CD4-positive, alpha-beta T cell (primary cell): ENCODE measurements at regions of chr17 and their contacts with region 1.

Region 1: GRCh38 chr17:50865984-50866774 is at the start of gene TOB1:
- DNase-seq: peak; percentile 93 to 98 (median 97)
- ATAC-seq: peak; percentile 59
- H3K4me3 ChIP-seq: peak within 1 kb of the TSS; percentile 92
- H3K4me3 Mint-ChIP-seq: peak within 1 kb of the TSS; percentile 98
- H3K27ac ChIP-seq: peak within 1 kb of the TSS; percentile 92 to 98
- H3K27ac Mint-ChIP-seq: peak within 1 kb of the TSS; percentile 98
- H3K4me1 ChIP-seq: peaks cover 38% of the 10 kb centered on the region
- H3K4me1 Mint-ChIP-seq: peaks cover 68% of the 10 kb centered on the region
- H3K27me3 ChIP-seq: no peaks in the 10 kb centered on the region
- H3K27me3 Mint-ChIP-seq: peaks cover 5% of the 10 kb centered on the region
- CTCF ChIP-seq: no peak
- total RNA-seq, gene TOB1: 419 to 449 TPM

Region 2: DNA sequence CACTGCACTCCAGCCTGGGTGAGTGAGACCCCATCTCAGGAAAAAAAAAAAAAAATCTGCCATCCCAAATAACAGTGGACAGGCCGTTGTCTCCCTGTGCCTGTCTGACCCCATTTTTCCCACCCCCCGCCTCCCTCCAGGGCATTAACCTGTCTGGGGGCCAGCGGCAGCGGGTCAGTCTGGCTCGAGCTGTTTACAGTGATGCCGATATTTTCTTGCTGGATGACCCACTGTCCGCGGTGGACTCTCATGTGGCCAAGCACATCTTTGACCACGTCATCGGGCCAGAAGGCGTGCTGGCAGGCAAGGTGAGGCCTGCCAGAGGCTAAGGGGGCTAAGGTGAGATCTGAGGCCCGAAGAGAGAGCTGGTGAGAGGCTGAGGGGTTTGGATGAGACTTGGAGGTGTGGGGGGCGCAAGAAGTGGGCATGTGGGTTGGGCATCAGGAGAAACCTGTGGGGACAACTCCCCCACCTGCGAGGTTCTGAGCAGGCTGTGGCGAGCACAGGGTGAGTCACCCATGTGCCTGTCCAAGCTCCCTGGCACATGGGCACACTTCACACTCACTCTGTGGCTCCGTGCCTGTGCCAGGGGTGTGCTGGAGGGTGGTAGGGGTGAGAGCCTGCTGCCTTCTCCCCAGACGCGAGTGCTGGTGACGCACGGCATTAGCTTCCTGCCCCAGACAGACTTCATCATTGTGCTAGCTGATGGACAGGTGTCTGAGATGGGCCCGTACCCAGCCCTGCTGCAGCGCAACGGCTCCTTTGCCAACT is 193.2 kb before region 1 on chr17:
- CTCF ChIA-PET with region 1: no interaction called
- POLR2A ChIA-PET with region 1: no interaction called
- intact Hi-C with region 1: no loop called
- DNase-seq: no peak
- ATAC-seq: no peak
- H3K4me3 ChIP-seq: no peak overlapping the region
- H3K4me3 Mint-ChIP-seq: no peak overlapping the region
- H3K27ac ChIP-seq: no peak overlapping the region
- H3K27ac Mint-ChIP-seq: no peak overlapping the region
- H3K4me1 ChIP-seq: no peaks in the 10 kb centered on the region
- H3K4me1 Mint-ChIP-seq: no peaks in the 10 kb centered on the region
- H3K27me3 ChIP-seq: no peaks in the 10 kb centered on the region
- H3K27me3 Mint-ChIP-seq: no peaks in the 10 kb centered on the region
- CTCF ChIP-seq: no peak

Region 3: DNA sequence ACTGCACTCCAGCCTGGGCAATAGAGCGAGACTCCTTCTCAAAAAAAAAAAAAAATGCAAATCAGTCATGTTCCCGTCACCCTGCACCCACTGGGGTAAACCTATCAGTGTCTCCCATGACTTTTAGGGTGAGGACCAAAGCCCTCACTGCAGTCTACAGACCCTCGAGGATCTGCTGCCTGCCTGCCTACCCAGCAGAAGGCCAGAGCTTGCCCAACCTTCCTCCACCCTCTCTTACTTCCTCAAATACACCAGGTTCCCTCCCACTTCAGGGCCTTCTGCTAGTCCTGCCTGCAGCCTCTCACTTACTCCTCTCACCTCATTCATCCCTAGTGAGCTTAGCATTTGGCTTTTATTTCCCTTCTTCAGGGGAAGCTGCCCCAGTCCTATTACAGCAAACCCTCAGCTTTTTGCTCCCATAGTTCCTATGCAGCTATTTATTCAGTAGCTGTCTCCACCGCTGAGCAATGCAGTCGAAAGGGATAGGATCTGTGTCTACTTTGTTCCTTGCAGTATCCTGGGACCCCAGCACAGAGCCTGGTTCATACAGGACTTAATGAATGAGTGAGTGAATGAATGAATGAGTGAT is 17.8 kb after region 1 on chr17:
- CTCF ChIA-PET with region 1: no interaction called
- POLR2A ChIA-PET with region 1: interaction called, 125 read pairs
- intact Hi-C with region 1: no loop called
- DNase-seq: peak in 2 of 14 experiments; percentile 31 to 41
- ATAC-seq: no peak
- H3K4me3 ChIP-seq: no peak overlapping the region
- H3K4me3 Mint-ChIP-seq: no peak overlapping the region
- H3K27ac ChIP-seq: no peak overlapping the region
- H3K27ac Mint-ChIP-seq: peak overlapping the region; percentile 37
- H3K4me1 ChIP-seq: peaks cover 37% of the 10 kb centered on the region
- H3K4me1 Mint-ChIP-seq: peaks cover 50% of the 10 kb centered on the region
- H3K27me3 ChIP-seq: no peaks in the 10 kb centered on the region
- H3K27me3 Mint-ChIP-seq: no peaks in the 10 kb centered on the region
- CTCF ChIP-seq: no peak

Region 4: GRCh38 chr17:50919321-50920085 is 53.3 kb after region 1 on chr17:
- CTCF ChIA-PET with region 1: interaction called, 3 read pairs
- POLR2A ChIA-PET with region 1: interaction called, 74 read pairs
- intact Hi-C with region 1: no loop called
- DNase-seq: peak; percentile 58 to 96 (median 83)
- ATAC-seq: peak; percentile 90
- H3K4me3 ChIP-seq: no peak overlapping the region
- H3K4me3 Mint-ChIP-seq: peak overlapping the region; percentile 68
- H3K27ac ChIP-seq: peak overlapping the region; percentile 52 to 86
- H3K27ac Mint-ChIP-seq: peak overlapping the region; percentile 93
- H3K4me1 ChIP-seq: peaks cover 54% of the 10 kb centered on the region
- H3K4me1 Mint-ChIP-seq: peaks cover 38% of the 10 kb centered on the region
- H3K27me3 ChIP-seq: no peaks in the 10 kb centered on the region
- H3K27me3 Mint-ChIP-seq: no peaks in the 10 kb centered on the region
- CTCF ChIP-seq: no peak

Region 5: GRCh38 chr17:50949989-50950881 is 84.1 kb after region 1 on chr17:
- CTCF ChIA-PET with region 1: interaction called, 5 read pairs
- POLR2A ChIA-PET with region 1: interaction called, 211 read pairs
- intact Hi-C with region 1: loop called in 1 of 2 experiments (anchors 5 kb)
- DNase-seq: peak; percentile 32 to 80 (median 54)
- ATAC-seq: peak; percentile 84
- H3K4me3 ChIP-seq: no peak overlapping the region
- H3K4me3 Mint-ChIP-seq: no peak overlapping the region
- H3K27ac ChIP-seq: no peak overlapping the region
- H3K27ac Mint-ChIP-seq: peak overlapping the region; percentile 42
- H3K4me1 ChIP-seq: peaks cover 33% of the 10 kb centered on the region
- H3K4me1 Mint-ChIP-seq: peaks cover 34% of the 10 kb centered on the region
- H3K27me3 ChIP-seq: no peaks in the 10 kb centered on the region
- H3K27me3 Mint-ChIP-seq: no peaks in the 10 kb centered on the region
- CTCF ChIP-seq: peak; percentile 68

Region 6: GRCh38 chr17:51153210-51154072 is 287.3 kb after region 1 on chr17 and contains the start of gene NME1:
- CTCF ChIA-PET with region 1: no interaction called
- POLR2A ChIA-PET with region 1: interaction called, 20 read pairs
- intact Hi-C with region 1: loop called (anchors 2 to 5 kb)
- DNase-seq: peak; percentile 93 to 99 (median 96)
- ATAC-seq: peak; percentile 90
- H3K4me3 ChIP-seq: peak within 1 kb of the TSS; percentile 94
- H3K4me3 Mint-ChIP-seq: no peak within 1 kb of the TSS
- H3K27ac ChIP-seq: peak within 1 kb of the TSS; percentile 53 to 74
- H3K27ac Mint-ChIP-seq: no peak within 1 kb of the TSS
- H3K4me1 ChIP-seq: peaks cover 20% of the 10 kb centered on the region
- H3K4me1 Mint-ChIP-seq: peaks cover 13% of the 10 kb centered on the region
- H3K27me3 ChIP-seq: no peaks in the 10 kb centered on the region
- H3K27me3 Mint-ChIP-seq: no peaks in the 10 kb centered on the region
- CTCF ChIP-seq: peak; percentile 81
- total RNA-seq, gene NME1: 11.0 to 15.6 TPM